ENCODE measurements at regions of chr11 and their contacts with region 1.

Region 1: GRCh38 chr11:3854977-3855807 is at the start of gene STIM1:
- DNase-seq: peak; percentile 94 to 99 (median 97)
- ATAC-seq: peak; percentile 89
- H3K4me3 ChIP-seq: peak within 1 kb of the TSS; percentile 87
- H3K4me3 Mint-ChIP-seq: peak within 1 kb of the TSS; percentile 86 to 98 (median 92)
- H3K27ac ChIP-seq: peak within 1 kb of the TSS; percentile 92
- H3K27ac Mint-ChIP-seq: peak within 1 kb of the TSS; percentile 93 to 100 (median 98)
- H3K4me1 ChIP-seq: peaks cover 49 to 57% of the 10 kb centered on the region in 2 donors
- H3K4me1 Mint-ChIP-seq: peaks cover 53 to 72% (median 61%) of the 10 kb centered on the region in 7 donors
- H3K27me3 ChIP-seq: no peaks in the 10 kb centered on the region
- H3K27me3 Mint-ChIP-seq: peaks cover 0 to 2% (median 0%) of the 10 kb centered on the region in 5 donors
- total RNA-seq, gene STIM1: 95.6 to 117 (median 103) TPM

Region 2: DNA sequence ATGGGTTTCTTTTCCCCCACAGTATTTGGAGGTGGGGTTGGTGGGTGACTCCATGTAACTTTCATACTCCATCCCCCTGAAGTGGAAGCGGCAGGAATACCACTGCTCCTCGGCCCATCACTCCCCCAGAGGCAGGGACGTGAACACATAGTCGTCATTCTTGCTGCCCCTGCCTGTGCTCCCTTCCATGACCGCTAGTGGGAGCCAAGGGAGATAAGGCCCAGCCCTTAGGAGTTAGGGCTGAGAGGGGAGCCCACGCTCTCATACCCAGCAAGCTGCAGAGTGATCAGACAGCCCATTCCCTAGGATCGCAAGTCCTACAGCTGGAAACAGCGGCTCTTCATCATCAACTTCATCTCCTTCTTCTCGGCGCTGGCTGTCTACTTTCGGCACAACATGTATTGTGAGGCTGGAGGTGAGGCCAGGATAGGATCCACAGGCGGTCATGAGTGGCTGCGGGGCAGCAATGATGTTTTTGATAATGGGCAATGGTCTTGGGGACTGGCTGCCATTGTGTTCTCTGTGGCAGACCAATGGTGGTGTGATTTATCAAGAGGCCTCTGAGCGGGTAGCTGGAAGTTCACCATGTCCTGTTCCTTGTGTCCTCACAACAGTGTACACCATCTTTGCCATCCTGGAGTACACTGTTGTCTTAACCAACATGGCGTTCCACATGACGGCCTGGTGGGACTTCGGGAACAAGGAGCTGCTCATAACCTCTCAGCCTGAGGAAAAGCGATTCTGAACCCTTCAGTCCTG is 30.3 kb before region 1 on chr11:
- CTCF ChIA-PET with region 1: interaction called, 10 read pairs
- POLR2A ChIA-PET with region 1: interaction called, 399 read pairs
- intact Hi-C with region 1: loop called in 1 of 2 experiments (anchors 1 kb)
- DNase-seq: peak; percentile 65 to 83 (median 77)
- ATAC-seq: peak; percentile 97
- H3K4me3 ChIP-seq: no peak overlapping the region
- H3K4me3 Mint-ChIP-seq: no peak overlapping the region
- H3K27ac ChIP-seq: peak overlapping the region; percentile 38
- H3K27ac Mint-ChIP-seq: peak overlapping the region; percentile 60 to 96 (median 87)
- H3K4me1 ChIP-seq: peaks cover 13 to 14% of the 10 kb centered on the region in 2 donors
- H3K4me1 Mint-ChIP-seq: peaks cover 15 to 46% (median 44%) of the 10 kb centered on the region in 7 donors
- H3K27me3 ChIP-seq: no peaks in the 10 kb centered on the region
- H3K27me3 Mint-ChIP-seq: no peaks in the 10 kb centered on the region

Region 3: DNA sequence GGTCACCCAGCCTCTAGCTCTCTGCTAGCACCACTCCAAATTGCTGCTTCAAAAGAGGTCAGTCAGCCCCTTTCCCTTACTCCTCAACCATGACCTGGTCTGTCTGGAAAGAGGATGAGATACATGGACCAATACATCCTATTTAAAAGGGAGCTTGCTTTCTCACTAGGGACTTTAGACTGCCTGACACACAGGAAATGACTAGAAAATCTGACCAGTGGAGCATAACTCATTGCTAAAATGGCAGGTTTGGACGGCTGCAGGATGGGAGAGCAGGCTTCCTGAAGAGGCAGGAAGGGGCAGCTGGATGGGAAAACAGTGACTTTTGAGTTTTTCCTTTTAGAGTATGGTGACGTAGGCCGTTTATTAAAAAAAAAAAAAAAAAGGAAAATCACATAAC is 25.5 kb after region 1 on chr11:
- CTCF ChIA-PET with region 1: interaction called, 13 read pairs
- POLR2A ChIA-PET with region 1: interaction called, 9 read pairs
- intact Hi-C with region 1: loop called in 1 of 2 experiments (anchors 1 kb)
- DNase-seq: no peak
- ATAC-seq: peak; percentile 38
- H3K4me3 ChIP-seq: no peak overlapping the region
- H3K4me3 Mint-ChIP-seq: peak overlapping the region in 9 of 10 donors; percentile 4 to 63 (median 41)
- H3K27ac ChIP-seq: peak overlapping the region; percentile 17
- H3K27ac Mint-ChIP-seq: peak overlapping the region; percentile 1 to 87 (median 68)
- H3K4me1 ChIP-seq: peaks cover 32 to 39% of the 10 kb centered on the region in 2 donors
- H3K4me1 Mint-ChIP-seq: peaks cover 59 to 90% (median 85%) of the 10 kb centered on the region in 7 donors
- H3K27me3 ChIP-seq: no peaks in the 10 kb centered on the region
- H3K27me3 Mint-ChIP-seq: no peaks in the 10 kb centered on the region

Region 4: DNA sequence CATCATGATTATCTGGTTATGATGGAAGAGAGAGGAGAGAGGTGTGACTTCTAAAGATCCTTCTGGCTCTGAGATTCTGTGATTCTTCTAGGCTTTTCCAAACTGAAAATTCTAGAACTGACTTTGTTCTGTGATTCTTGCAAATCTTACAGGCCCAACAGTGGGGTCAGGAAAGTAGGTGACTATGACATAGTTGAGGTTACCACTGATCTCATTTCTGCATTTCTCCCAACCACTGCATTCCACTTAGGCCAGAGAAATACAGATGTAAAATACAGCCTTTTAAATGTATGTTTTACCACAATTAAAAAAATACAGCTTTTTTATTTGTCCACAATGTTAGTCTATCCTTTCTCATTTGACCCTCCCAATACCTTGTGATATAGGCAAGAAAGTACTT is 84.0 kb after region 1 on chr11:
- CTCF ChIA-PET with region 1: interaction called, 30 read pairs
- POLR2A ChIA-PET with region 1: interaction called, 86 read pairs
- intact Hi-C with region 1: loop called in 1 of 2 experiments (anchors 1 kb)
- DNase-seq: no peak
- ATAC-seq: no peak
- H3K4me3 ChIP-seq: no peak overlapping the region
- H3K4me3 Mint-ChIP-seq: peak overlapping the region in 1 of 10 donors; percentile 26
- H3K27ac ChIP-seq: no peak overlapping the region
- H3K27ac Mint-ChIP-seq: peak overlapping the region in 8 of 9 donors; percentile 44 to 95 (median 76)
- H3K4me1 ChIP-seq: peaks cover 26 to 49% of the 10 kb centered on the region in 2 donors
- H3K4me1 Mint-ChIP-seq: peaks cover 56 to 92% (median 84%) of the 10 kb centered on the region in 7 donors
- H3K27me3 ChIP-seq: no peaks in the 10 kb centered on the region
- H3K27me3 Mint-ChIP-seq: no peaks in the 10 kb centered on the region

Region 5: GRCh38 chr11:3984896-3985295 is 129.7 kb after region 1 on chr11:
- CTCF ChIA-PET with region 1: interaction called, 45 read pairs
- POLR2A ChIA-PET with region 1: interaction called, 22 read pairs
- intact Hi-C with region 1: loop called (anchors 1 to 2 kb)
- DNase-seq: peak in 8 of 9 donors; percentile 23 to 55 (median 36)
- ATAC-seq: peak; percentile 69
- H3K4me3 ChIP-seq: no peak overlapping the region
- H3K4me3 Mint-ChIP-seq: peak overlapping the region in 8 of 10 donors; percentile 1 to 43 (median 3)
- H3K27ac ChIP-seq: peak overlapping the region; percentile 5
- H3K27ac Mint-ChIP-seq: peak overlapping the region in 8 of 9 donors; percentile 26 to 90 (median 82)
- H3K4me1 ChIP-seq: peaks cover 20 to 45% of the 10 kb centered on the region in 2 donors
- H3K4me1 Mint-ChIP-seq: peaks cover 53 to 99% (median 93%) of the 10 kb centered on the region in 7 donors
- H3K27me3 ChIP-seq: no peaks in the 10 kb centered on the region
- H3K27me3 Mint-ChIP-seq: no peaks in the 10 kb centered on the region

Region 6: DNA sequence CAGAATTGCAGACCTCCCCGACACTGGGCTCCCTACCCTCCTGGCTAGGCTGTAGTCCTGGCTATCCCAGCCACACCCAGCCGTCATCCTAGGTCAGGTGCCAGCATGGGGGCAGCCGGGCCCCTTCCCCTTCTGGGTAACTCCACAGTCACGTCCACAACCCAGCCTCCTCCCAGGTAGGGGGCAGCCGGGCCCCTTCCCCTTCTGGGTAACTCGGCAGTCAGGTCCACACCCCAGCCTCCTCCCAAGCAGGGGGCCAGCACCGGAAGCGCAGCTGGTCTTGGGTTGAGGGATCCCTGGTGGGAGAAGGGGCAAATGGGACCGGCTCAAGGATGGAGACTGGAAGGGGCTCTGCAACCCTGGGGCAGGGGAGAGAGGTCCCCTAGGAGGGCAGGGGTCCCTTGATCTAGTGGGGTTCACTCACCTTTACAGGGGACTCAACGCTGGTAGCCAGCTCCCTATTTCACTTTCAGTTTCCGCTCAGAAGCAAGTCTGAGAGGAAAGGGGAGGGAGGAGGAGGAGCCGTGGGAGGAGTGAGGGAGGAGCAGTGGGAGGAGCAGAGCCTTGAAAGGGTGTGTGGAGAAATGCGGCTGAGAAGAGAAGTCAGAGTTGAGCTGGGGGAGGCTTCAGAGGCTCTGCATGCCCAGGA is 538.1 kb after region 1 on chr11 and contains the start of gene TRIM21:
- CTCF ChIA-PET with region 1: no interaction called
- POLR2A ChIA-PET with region 1: no interaction called
- intact Hi-C with region 1: loop called in 1 of 2 experiments (anchors 1 kb)
- DNase-seq: peak; percentile 62 to 92 (median 87)
- ATAC-seq: peak; percentile 100
- H3K4me3 ChIP-seq: peak within 1 kb of the TSS; percentile 87
- H3K4me3 Mint-ChIP-seq: peak within 1 kb of the TSS; percentile 88 to 94 (median 90)
- H3K27ac ChIP-seq: peak within 1 kb of the TSS; percentile 89
- H3K27ac Mint-ChIP-seq: peak within 1 kb of the TSS; percentile 68 to 96 (median 93)
- H3K4me1 ChIP-seq: peaks cover 8 to 14% of the 10 kb centered on the region in 2 donors
- H3K4me1 Mint-ChIP-seq: peaks cover 47 to 61% (median 58%) of the 10 kb centered on the region in 7 donors
- H3K27me3 ChIP-seq: no peaks in the 10 kb centered on the region
- H3K27me3 Mint-ChIP-seq: peaks cover 0 to 8% (median 5%) of the 10 kb centered on the region in 5 donors
- total RNA-seq, gene TRIM21: 17.5 to 78.9 (median 29.7) TPM

Region 7: GRCh38 chr11:4511282-4512245 is 656.4 kb after region 1 on chr11:
- CTCF ChIA-PET with region 1: no interaction called
- POLR2A ChIA-PET with region 1: no interaction called
- intact Hi-C with region 1: no loop called
- DNase-seq: no peak
- ATAC-seq: no peak
- H3K4me3 ChIP-seq: no peak overlapping the region
- H3K4me3 Mint-ChIP-seq: no peak overlapping the region
- H3K27ac ChIP-seq: no peak overlapping the region
- H3K27ac Mint-ChIP-seq: no peak overlapping the region
- H3K4me1 ChIP-seq: no peaks in the 10 kb centered on the region
- H3K4me1 Mint-ChIP-seq: no peaks in the 10 kb centered on the region
- H3K27me3 ChIP-seq: no peaks in the 10 kb centered on the region
- H3K27me3 Mint-ChIP-seq: peaks cover 0 to 25% (median 19%) of the 10 kb centered on the region in 5 donors

Measured in naive thymus-derived CD4-positive, alpha-beta T cell (primary cell).